ENCODE measurements at regions of chr1 and their contacts with region 1.

Region 1: DNA sequence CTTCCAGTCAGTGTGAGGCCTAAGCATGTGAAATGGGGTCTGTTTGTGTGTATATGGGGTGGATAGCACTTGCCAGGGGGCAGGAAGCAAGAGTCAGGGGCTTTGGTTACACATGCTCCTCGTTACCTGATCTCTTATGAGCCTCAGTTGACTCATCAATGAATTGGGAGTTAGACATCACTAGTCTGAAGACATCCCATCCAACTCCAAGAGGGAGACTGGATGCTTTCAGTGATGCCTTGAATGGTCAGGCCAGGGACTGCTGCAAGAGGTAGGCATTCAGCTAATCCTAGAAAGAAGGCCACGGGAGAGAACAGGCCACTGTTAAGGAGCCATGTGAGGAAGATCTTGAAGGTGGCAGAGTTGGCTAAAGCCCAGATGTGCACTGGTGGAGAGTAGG is 6.3 kb downstream of the RAB25 start:
- DNase-seq: no peak
- H3K4me3 ChIP-seq: no peak overlapping the region
- H3K27ac ChIP-seq: no peak overlapping the region
- H3K27me3 ChIP-seq: no peaks in the 10 kb centered on the region
- CTCF ChIP-seq: no peak

Region 2: GRCh38 chr1:155598842-155599331 is 468.4 kb before region 1 on chr1:
- CTCF ChIA-PET with region 1: no interaction called
- POLR2A ChIA-PET with region 1: no interaction called
- DNase-seq: no peak
- H3K4me3 ChIP-seq: peak overlapping the region; percentile 15; the same call in 1 of the 2 replicates
- H3K27ac ChIP-seq: no peak overlapping the region
- H3K27me3 ChIP-seq: no peaks in the 10 kb centered on the region
- CTCF ChIP-seq: no peak

Region 3: DNA sequence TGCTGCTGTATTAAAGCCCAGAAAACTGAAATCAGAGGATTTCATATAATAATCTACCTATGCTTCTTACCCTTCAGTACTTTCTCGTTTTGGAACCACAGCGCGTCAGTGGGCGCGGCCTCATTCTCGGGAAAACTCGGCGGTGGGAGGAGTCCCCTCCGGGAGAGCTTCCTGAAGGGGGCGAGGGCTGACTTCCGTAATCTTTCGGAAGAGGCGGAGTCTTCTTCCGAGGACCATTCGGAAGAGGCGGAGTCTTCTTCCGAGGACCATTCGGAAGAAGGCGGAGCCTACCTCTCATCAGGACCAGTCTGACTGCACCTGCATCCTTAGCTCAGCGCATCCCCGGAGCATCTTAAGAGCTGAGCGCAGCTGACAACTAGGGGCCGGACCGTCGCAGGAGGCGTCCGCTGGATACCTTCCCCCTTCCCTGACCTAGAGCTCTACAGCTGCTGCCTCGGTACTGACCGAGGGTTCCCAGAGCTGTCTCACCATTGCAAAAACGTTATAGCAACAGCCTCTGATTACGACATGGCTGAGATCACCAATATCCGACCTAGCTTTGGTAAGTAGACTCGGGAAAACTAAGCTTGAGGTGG is 207.9 kb before region 1 on chr1 and contains the start of gene SYT11:
- CTCF ChIA-PET with region 1: no interaction called
- POLR2A ChIA-PET with region 1: no interaction called
- DNase-seq: peak; percentile 86
- H3K4me3 ChIP-seq: peak within 1 kb of the TSS; percentile 65
- H3K27ac ChIP-seq: peak within 1 kb of the TSS; percentile 92
- H3K27me3 ChIP-seq: no peaks in the 10 kb centered on the region
- CTCF ChIP-seq: 0 out of 2 replicates have a peak, but pooled peaks have one; percentile 3
- polyA plus RNA-seq, gene SYT11: 44.8 and 49.0 TPM in 2 replicates

Region 4: GRCh38 chr1:156054500-156055280 is 12.6 kb before region 1 on chr1 and contains the start of gene LAMTOR2:
- CTCF ChIA-PET with region 1: interaction called, 11 read pairs
- POLR2A ChIA-PET with region 1: interaction called, 4 read pairs
- DNase-seq: peak; percentile 80
- H3K4me3 ChIP-seq: peak within 1 kb of the TSS; percentile 98
- H3K27ac ChIP-seq: peak within 1 kb of the TSS; percentile 93
- H3K27me3 ChIP-seq: no peaks in the 10 kb centered on the region
- CTCF ChIP-seq: no peak
- polyA plus RNA-seq, gene LAMTOR2: 42.4 and 60.4 TPM in 2 replicates

Measured in AG04450 (cell line).